AG04449 (cell line): ENCODE measurements at regions of chr4 and their contacts with region 1.

Region 1: DNA sequence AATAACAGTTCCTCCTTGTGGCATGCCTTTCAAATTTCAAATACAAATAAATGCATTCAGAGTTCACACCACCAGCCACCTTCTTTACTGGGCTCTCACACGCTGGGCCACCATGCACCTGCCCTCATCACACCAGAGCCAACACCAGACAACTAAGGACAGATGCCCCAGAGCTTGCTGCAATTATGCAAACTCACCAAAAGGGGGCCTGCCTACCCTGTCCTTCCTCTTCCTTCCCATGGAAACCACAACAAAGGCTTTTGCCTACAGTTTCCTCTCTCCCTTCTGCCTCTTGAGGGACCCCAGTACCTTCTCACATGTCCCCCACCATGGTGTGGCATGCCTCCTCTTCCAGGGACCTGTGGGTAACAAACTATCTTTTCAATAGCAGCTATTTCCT is 1333.9 kb upstream of the TENM3 start:
- DNase-seq: no peak
- H3K4me3 ChIP-seq: no peak overlapping the region
- CTCF ChIP-seq: peak; percentile 37

Region 2: GRCh38 chr4:180898305-180898704 is 11.0 kb before region 1 on chr4:
- CTCF ChIA-PET with region 1: no interaction called
- POLR2A ChIA-PET with region 1: no interaction called
- DNase-seq: no peak
- H3K4me3 ChIP-seq: no peak overlapping the region
- CTCF ChIP-seq: no peak

Region 3: GRCh38 chr4:180947425-180947824 is 38.1 kb after region 1 on chr4:
- CTCF ChIA-PET with region 1: interaction called, 11 read pairs
- POLR2A ChIA-PET with region 1: no interaction called
- DNase-seq: no peak
- H3K4me3 ChIP-seq: no peak overlapping the region
- CTCF ChIP-seq: no peak